GM12878 (cell line): ENCODE measurements at regions of chr12 and their contacts with region 1.

Region 1: GRCh38 chr12:91355150-91356006 is 172.8 kb upstream of the DCN start:
- DNase-seq: peak; percentile 3
- ATAC-seq: peak; percentile 99
- H3K4me3 ChIP-seq: no peak overlapping the region
- H3K27ac ChIP-seq: no peak overlapping the region
- H3K4me1 ChIP-seq: no peaks in the 10 kb centered on the region
- H3K27me3 ChIP-seq: no peaks in the 10 kb centered on the region
- CTCF ChIP-seq: peak; percentile 68 to 82 (median 72); a peak in 5 of 6 replicates
- EP300 ChIP-seq: no peak
- POLR2A ChIP-seq: no peak
- RAD21 ChIP-seq: peak; percentile 75

Region 2: DNA sequence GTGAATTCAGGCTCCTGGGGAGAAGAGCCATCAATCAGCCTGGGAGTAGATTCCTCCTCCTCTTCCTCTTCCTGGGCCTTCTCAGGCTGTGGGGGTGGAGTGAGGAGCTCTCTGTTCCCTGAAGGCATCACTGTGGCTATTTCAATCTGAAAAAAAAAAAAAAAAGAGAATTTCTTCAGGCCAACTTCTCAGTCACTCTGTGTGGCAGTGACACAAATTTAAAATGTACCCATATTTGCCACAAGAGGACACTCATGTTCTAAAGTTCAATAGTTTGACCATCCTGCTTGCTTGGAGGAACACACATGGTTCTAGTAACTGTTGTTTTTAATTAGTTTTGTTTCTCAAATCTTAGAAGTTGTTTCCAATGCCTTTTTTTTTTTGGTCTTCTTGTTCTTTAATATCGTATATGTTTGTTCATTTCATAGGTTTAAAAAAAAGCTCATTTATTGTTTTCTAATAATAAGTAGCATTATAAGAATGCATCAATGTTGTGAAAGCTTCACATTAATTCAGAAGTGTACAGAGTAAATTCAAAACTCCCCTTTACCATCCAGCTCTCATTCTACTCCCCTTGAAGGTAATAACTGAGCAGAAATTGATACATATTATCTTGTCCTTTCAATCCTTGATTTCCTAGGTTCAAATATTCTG is 377.1 kb before region 1 on chr12:
- CTCF ChIA-PET with region 1: interaction called, 5 read pairs
- POLR2A ChIA-PET with region 1: no interaction called
- RAD21 ChIA-PET with region 1: no interaction called
- SMC1A ChIA-PET with region 1: interaction called, 3 read pairs
- in situ Hi-C with region 1: no loop called
- intact Hi-C with region 1: loop called (anchors 2 kb)
- DNase-seq: peak; percentile 11
- ATAC-seq: peak; percentile 87
- H3K4me3 ChIP-seq: no peak overlapping the region
- H3K27ac ChIP-seq: no peak overlapping the region
- H3K4me1 ChIP-seq: no peaks in the 10 kb centered on the region
- H3K27me3 ChIP-seq: no peaks in the 10 kb centered on the region; a peak in 1 of 4 replicates
- CTCF ChIP-seq: peak; percentile 56 to 87 (median 58); a peak in 5 of 6 replicates
- EP300 ChIP-seq: no peak
- POLR2A ChIP-seq: no peak
- RAD21 ChIP-seq: peak; percentile 94

Region 3: DNA sequence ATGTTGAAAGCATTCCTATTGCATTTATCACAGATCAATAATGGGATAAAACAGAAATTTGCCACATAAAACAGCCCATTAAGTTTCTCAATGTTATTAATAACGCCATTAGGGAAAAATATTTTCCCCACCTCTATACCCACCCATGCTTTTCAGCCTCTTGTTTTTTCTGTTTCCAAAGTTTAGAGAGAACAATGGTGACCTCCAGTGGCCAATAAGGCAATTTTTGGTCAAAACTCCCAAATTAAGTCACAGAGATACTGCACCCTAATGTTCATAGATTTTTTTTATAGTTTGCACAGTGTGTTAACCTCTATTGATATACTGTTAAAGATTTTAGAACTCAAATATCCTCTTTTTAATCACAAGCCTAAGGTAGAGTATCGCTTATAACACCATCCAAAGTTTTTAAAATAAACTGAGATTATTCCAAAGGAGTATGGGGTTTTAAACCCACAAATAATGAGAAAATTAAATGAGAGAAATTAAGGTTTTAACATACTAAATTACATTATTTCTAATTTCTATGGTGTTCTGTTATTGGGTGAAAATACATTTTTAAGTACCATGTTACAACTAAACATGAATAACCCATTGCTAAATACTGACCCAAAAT is 12.0 kb after region 1 on chr12:
- CTCF ChIA-PET with region 1: interaction called, 13 read pairs
- POLR2A ChIA-PET with region 1: no interaction called
- RAD21 ChIA-PET with region 1: no interaction called
- SMC1A ChIA-PET with region 1: interaction called, 3 read pairs
- in situ Hi-C with region 1: no loop called
- intact Hi-C with region 1: no loop called
- DNase-seq: no peak
- ATAC-seq: peak; percentile 68
- H3K4me3 ChIP-seq: no peak overlapping the region
- H3K27ac ChIP-seq: no peak overlapping the region
- H3K4me1 ChIP-seq: no peaks in the 10 kb centered on the region
- H3K27me3 ChIP-seq: no peaks in the 10 kb centered on the region
- CTCF ChIP-seq: peak; percentile 38 to 41 (median 40); a peak in 4 of 6 replicates
- EP300 ChIP-seq: no peak
- POLR2A ChIP-seq: no peak
- RAD21 ChIP-seq: peak; percentile 44; the same call in 1 of the 2 replicates